ENCODE measurements at regions of chr17 and their contacts with region 1.

Region 1: DNA sequence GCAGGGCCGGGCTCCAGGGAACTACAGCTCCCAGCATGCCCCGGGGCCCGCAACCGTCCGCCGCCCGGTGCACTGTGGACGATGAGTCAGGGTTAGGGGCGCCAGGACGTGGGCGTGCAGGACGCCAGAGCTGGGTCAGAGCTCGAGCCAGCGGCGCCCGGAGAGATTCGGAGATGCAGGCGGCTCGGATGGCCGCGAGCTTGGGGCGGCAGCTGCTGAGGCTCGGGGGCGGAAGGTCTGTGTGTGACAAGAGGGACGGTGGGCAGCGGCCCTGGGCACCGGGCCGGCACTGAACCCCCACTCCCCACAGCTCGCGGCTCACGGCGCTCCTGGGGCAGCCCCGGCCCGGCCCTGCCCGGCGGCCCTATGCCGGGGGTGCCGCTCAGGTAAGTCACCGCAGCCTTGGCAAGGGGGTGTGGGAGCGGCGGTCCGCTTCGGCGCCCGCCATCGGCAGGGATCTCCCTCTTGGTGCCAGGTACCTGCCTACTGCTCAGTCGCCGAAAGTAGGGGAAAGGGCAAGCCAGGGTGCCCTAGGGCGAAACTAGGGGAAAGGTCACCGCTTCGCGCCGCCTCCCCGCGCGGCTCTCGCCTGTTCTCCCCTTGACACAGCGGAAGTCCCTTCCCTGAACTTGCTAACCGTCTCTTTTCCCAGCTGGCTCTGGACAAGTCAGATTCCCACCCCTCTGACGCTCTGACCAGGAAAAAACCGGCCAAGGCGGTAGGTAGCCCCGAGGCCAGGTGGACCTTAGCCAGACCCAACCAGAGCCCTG is at the starts of genes ACADVL and DLG4:
- DNase-seq: peak; percentile 74
- H3K4me3 Mint-ChIP-seq: peak within 1 kb of the TSS; percentile 96
- H3K27ac Mint-ChIP-seq: peak within 1 kb of the TSS; percentile 96
- H3K4me1 Mint-ChIP-seq: peaks cover 54% of the 10 kb centered on the region
- H3K27me3 Mint-ChIP-seq: peaks cover 2% of the 10 kb centered on the region
- total RNA-seq, gene ACADVL: 287 and 294 TPM in 2 replicates
- total RNA-seq, gene DLG4: 15.3 and 15.5 TPM in 2 replicates

Region 2: DNA sequence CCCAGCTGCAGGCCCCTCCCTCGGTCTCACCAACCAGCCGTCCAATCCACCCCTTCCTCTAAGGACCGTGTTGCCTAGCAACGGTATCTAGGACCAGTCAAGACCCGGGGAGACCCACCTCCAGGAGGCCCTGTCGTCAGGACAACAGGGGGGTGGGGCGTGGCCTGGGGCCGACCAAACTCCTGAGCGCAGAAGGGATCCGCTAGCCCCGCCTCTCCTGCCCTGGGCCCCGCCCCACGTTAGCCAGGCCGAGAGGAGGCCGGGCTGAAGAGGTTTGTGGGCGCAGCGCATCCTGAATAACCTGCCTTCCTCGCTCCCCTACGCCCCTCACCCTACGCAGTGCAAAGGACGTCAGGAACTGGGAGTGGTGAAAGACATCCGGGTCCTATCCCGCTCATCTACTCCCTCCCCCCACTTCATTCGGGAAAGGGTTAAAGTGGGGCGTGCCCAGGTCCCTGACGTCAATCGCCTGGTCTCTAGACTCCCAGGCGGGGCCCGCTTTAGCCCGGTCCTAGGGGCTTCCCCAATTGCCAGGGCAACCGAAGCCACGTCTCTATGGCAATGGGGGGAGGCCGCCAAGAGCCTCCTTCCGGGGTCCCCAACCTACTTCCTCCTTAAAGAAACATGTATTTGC is 15.1 kb before region 1 on chr17:
- intact Hi-C with region 1: loop called (anchors 2 kb)
- DNase-seq: peak; percentile 92
- H3K4me3 Mint-ChIP-seq: peak overlapping the region; percentile 85
- H3K27ac Mint-ChIP-seq: peak overlapping the region; percentile 86
- H3K4me1 Mint-ChIP-seq: peaks cover 24% of the 10 kb centered on the region
- H3K27me3 Mint-ChIP-seq: peaks cover 2% of the 10 kb centered on the region

Region 3: GRCh38 chr17:7234083-7234951 is 14.3 kb after region 1 on chr17 and contains the start of gene DVL2:
- intact Hi-C with region 1: loop called (anchors 1 kb)
- DNase-seq: peak; percentile 93
- H3K4me3 Mint-ChIP-seq: peak within 1 kb of the TSS; percentile 91
- H3K27ac Mint-ChIP-seq: peak within 1 kb of the TSS; percentile 92
- H3K4me1 Mint-ChIP-seq: peaks cover 46% of the 10 kb centered on the region
- H3K27me3 Mint-ChIP-seq: no peaks in the 10 kb centered on the region
- total RNA-seq, gene DVL2: 70.0 and 73.5 TPM in 2 replicates

Region 4: DNA sequence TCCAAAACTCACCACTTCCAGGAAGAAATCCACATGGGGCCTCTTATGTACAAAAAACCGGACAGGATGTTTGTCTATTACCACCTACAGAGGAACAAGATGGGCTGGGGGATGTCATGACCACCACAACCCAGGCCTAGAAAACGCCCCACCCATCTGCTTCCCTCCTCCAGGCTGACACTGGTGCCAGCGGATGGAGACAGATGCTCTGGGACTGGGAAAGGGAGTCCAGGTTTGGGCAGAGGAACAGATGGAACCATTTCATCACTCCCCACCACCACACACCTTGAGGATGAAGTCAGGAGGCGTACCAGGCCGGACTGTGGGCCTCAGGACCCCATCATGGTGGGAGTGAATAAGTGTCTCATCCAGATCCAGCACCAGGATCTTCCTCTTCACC is 26.8 kb after region 1 on chr17:
- intact Hi-C with region 1: no loop called
- DNase-seq: no peak
- H3K4me3 Mint-ChIP-seq: no peak overlapping the region
- H3K27ac Mint-ChIP-seq: no peak overlapping the region
- H3K4me1 Mint-ChIP-seq: peaks cover 42% of the 10 kb centered on the region
- H3K27me3 Mint-ChIP-seq: no peaks in the 10 kb centered on the region

Region 5: GRCh38 chr17:7296189-7296902 is 76.3 kb after region 1 on chr17:
- intact Hi-C with region 1: loop called (anchors 1 kb)
- DNase-seq: peak; percentile 63
- H3K4me3 Mint-ChIP-seq: peak overlapping the region; percentile 22
- H3K27ac Mint-ChIP-seq: no peak overlapping the region
- H3K4me1 Mint-ChIP-seq: peaks cover 16% of the 10 kb centered on the region
- H3K27me3 Mint-ChIP-seq: peaks cover 34% of the 10 kb centered on the region

Measured in activated T-helper 1 cell treated with anti-CD3 and anti-CD28 coated beads, Interleukin-12 subunit alpha, Interleukin-12 subunit beta, Interleukin-2, Interleukin-4 antibody, amounts not matched to agents 30 ng/mL and 10 ng/mL and 1 ng/mL, durations not matched to agents 14 hours and 24 hours and 36 hours (primary cell).